Motor neuron (in vitro differentiated cells): ENCODE measurements at regions of chr16 and their contacts with region 1.

Region 1: DNA sequence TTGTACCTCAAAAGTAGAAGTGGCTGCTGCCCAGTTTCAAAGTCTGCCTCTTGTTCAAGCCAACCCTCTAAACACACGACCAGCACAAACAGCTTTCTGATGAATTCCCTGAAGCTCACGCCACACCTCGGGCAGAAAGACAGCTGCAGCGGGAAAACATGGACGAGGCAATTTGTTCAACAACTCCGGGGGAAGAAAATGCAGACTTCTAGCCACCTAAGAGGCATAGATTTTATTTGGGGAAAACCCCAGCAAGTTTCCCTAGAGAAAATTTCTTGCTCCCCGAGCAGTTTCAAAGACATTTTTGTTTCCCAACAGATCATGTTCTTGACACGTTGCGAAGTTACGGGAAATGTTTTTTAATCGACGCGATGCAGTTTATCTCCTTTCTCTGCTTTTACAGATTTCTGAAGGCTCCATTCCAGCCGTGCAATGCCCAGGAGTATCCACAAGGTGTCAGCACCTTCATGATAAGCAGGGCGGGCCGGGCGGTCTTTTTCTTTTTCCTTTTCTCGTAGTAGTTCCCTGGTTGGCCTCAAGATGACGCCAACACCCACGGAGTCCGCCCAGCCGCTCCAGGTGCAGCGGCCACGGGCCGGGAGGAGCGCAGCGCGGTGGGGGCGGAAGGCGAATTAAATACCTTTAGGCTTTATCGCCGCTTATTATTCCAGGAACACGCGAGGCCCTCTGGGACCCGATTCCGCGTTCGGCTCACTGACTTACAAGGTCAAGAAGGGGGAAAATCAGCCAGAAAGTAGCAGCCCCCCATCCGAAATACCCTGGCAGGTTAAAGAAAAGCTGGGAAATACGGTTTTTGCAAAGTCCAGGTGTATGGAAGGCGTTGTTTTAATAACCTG is 2.9 kb upstream of the FOXC2 start:
- ATAC-seq: peak; percentile 47 to 88 (median 82)
- H3K4me3 ChIP-seq: peak overlapping the region in 1 of 5 donors; percentile 16
- H3K27ac ChIP-seq: no peak overlapping the region
- H3K4me1 ChIP-seq: peaks cover 0 to 2% of the 10 kb centered on the region in 2 donors

Region 2: GRCh38 chr16:87062569-87063442 is 499.1 kb after region 1 on chr16:
- in situ Hi-C with region 1: loop called (anchors 10 to 25 kb)
- ATAC-seq: peak; percentile 76 to 93 (median 86)
- H3K4me3 ChIP-seq: no peak overlapping the region
- H3K27ac ChIP-seq: no peak overlapping the region
- H3K4me1 ChIP-seq: peaks cover 23 to 30% of the 10 kb centered on the region in 2 donors

Region 3: GRCh38 chr16:87278191-87279095 is 714.7 kb after region 1 on chr16:
- in situ Hi-C with region 1: loop called in 7 of 9 experiments (anchors 10 to 25 kb)
- ATAC-seq: peak; percentile 92 to 99 (median 97)
- H3K4me3 ChIP-seq: no peak overlapping the region
- H3K27ac ChIP-seq: no peak overlapping the region
- H3K4me1 ChIP-seq: peaks cover 10 to 11% of the 10 kb centered on the region in 2 donors

Region 4: DNA sequence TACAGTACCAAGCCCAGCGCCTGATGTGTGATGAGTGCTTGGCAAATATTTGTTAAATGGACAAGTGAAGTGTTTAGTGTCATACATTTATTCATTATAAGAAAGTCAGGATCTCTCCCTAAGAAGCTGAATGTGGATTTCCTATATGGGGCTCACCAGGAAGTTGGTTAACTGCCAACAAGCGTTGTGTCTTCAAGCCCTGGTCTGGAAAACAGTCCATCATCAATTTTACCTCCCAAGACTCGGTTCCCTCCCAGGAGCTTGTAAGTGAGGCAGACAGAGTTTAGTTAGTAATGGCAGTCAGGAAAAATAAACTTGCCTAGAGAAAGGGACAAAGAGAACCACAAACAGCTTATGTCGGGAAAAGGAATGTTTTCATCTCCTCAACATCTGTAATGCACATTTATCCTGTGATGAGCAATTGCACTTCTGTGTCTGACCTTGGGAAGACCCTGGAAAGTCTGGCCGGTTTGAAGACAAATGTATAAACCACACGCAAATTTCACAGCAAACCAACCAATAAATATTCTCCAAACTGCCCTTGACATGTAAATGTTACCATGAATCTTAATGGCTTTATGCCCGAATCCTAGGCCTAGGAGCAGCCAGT is 725.1 kb after region 1 on chr16:
- in situ Hi-C with region 1: loop called in 7 of 9 experiments (anchors 5 to 25 kb)
- ATAC-seq: peak in 4 of 8 experiments; percentile 9 to 86 (median 34)
- H3K4me3 ChIP-seq: no peak overlapping the region
- H3K27ac ChIP-seq: no peak overlapping the region
- H3K4me1 ChIP-seq: peaks cover 4 to 6% of the 10 kb centered on the region in 2 donors

Region 5: DNA sequence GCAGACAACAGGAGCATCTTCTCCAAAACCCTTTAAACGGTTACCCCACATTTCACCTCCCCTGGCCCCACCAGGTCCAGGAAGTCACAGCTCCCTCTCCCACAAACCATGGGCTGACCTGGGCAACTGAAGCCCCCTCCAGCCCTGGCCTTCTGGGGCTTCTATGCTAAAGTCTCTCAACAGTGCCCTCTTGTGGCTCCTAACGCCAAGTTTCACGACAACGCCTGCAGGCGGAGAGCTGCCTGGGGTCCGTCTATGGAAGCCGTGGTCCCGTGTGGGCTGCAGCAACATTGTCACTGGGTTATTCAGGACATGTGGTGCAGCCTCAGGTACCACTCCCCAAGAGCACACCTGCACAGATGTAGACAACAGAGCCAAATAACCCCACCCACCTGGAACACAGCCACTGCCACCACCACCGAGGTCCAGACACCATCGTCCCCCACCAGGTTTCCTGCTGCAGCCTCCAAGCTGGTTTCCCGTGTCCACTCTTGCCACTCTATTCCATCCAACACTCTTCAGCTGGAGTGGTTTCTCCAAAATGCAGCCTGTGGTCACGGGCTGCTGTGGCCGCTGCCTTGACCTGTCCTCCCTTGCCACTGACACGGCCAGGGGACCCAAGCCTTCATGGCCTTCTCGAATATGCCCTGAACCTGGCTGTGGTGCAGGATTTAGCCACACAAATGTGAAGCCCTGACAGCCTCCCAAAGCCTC is 734.4 kb after region 1 on chr16:
- in situ Hi-C with region 1: loop called in 6 of 9 experiments (anchors 10 to 25 kb)
- ATAC-seq: peak in 5 of 8 experiments; percentile 38 to 72 (median 58)
- H3K4me3 ChIP-seq: no peak overlapping the region
- H3K27ac ChIP-seq: no peak overlapping the region
- H3K4me1 ChIP-seq: no peaks in the 10 kb centered on the region